ENCODE measurements at regions of chr10 and their contacts with region 1.

Region 1: DNA sequence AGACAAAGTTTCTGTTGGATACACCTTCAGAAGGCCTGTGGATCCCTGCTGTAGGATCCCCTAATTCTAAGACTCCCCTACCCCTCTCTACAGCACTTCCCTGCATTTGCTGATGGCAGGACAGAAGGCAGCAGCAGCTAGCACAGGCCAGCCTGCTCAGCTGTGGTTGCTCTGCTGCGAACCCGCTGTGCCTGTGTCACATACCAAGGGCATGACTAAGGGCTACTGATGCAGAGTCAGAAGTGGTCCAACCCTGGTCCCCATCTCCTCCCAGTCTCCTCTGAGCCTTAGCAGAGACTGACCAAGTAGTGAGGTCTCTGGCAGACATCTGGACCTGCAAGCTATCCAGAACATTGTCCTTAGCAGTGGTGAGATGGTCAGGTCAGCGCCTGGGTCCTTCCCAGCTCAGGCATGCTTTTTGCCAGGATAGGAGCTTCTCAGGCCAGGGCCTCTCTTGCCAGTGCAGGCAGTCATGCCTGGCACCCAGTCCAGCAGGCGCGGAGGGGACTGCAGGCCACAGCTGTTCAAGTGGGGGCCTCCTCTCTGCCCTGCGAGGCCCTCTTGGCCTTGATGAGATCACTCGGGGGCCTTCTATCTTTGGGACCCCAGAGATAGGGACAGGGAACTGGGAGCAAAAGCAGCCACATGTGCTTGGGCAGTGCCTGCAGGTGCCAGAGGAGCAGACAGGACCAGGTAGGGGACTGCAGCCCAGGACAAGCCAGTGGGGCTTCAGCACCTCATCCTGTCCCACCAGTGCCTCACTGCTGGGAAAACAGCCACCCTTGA is 146.4 kb downstream of the ZNF248 start:
- DNase-seq: peak; percentile 47

Region 2: GRCh38 chr10:37535459-37536246 is 175.4 kb before region 1 on chr10:
- in situ Hi-C with region 1: loop called (anchors 25 kb)
- DNase-seq: peak; percentile 54

Region 3: DNA sequence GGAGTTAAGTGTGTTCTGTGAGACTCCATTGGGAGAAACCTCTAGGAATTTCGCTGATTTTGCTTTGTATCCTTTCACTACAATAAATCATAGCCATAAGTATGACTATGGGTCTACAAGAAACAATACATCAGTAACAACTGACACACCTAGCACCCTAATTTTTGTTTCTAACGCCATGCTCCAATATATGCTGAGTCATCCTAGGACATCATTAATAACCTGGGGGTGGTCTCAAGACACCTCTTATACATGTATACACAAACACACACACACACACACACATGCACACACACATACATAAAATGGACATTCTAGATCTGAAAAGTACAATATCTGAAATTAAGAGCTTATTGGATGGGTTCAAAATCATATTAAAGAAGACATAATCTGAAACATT is 128.2 kb after region 1 on chr10:
- in situ Hi-C with region 1: no loop called
- DNase-seq: no peak

Measured in Caki2 (cell line).